Spleen (tissue), 13 donors: ENCODE measurements at regions of chr13 and their contacts with region 1.

Region 1: DNA sequence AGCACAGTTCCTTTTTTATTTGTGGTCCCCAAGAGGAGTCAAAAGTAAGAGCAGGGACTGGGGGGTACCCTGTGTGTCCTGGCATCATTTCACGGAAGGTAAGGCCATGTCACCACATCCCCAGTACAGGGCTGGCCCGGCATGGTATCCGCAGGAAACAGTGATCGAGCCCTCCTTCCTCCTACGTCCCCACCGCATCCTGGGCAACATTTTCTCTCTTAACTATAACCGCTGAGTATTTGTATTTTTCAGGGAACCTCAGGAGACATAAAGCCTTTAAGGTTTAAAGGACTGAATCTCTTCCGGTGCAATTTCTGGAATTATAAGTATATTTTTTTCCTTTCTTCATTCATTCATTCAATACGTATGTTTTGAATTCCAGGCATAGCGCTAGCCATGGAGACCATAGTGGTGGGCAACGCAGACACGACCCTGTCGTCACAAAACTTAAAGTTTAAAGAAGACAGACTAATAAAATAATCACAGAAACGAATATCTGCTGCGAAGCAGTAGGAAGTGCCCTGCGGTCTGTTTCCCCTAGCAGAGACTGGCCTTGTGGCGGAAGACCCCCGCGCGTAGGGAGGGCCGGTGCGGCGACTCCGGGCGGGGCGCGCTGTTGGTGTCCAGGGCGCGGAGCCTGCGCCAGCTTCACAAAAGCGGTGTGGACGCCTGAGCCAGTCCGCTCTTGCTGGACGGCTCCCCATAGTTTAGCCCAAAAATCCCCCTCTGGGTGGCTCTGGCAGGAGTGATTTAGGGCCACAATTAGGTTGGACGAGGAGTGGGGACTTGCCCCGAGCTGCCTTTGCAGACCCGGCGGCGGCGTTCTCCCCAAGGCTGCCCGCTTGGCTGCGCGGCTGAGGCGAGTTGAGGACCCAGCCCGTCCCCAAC is 13.9 kb upstream of the LATS2 start:
- DNase-seq: peak; percentile 88
- H3K4me3 ChIP-seq: peak overlapping the region; percentile 29 to 77 (median 54)
- H3K27ac ChIP-seq: peak overlapping the region; percentile 22 to 87 (median 70)
- H3K4me1 ChIP-seq: peaks cover 7 to 50% (median 24%) of the 10 kb centered on the region in 6 donors
- H3K27me3 ChIP-seq: peaks cover 0 to 19% (median 0%) of the 10 kb centered on the region in 7 donors
- CTCF ChIP-seq: no peak
- POLR2A ChIP-seq: no peak

Region 2: DNA sequence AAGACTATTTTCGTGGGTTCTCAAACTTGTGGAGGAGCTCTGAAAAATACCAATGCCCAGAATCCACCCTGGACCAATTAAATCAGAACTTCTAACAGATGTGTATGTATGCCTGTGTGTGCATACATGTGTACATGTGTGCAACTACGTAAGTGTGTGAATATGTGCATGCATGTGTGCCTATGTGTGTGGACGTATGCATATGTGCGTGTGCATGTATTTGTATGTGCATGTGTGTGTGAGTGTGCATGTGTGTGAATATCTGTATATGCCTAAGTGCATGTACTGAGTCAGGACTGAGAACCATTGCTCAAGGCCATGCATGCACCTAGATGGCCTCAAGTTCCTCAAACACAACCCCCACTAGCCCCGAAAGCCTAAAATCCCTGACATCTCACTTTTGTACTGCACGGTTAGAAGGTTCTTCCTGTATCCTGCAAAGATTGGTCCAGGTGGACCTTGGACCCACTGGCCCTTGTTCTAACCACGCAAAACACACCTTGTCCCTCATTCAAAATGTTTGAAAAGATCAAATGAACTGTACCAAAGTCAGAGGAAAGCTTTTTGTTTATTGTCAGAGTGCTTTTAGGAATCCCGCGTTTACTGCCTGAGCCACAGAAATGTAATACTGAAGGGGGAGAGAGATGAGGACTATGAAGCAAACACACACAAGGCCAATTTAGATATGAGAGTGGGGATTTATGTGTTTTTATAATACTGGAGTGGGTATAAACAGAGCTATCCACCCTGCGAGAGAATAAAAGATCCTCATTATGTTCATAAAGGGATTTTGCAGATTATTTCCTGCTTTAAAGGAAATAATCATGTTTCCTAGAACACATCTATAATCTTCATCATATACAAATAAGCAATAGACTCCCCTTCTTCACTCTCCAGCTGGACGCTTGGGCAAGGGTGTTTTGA is 52.9 kb before region 1 on chr13:
- intact Hi-C with region 1: loop called (anchors 10 kb)
- DNase-seq: no peak
- H3K4me3 ChIP-seq: no peak overlapping the region
- H3K27ac ChIP-seq: peak overlapping the region in 1 of 8 donors; percentile 11
- H3K4me1 ChIP-seq: peaks cover 10 to 49% (median 27%) of the 10 kb centered on the region in 6 donors
- H3K27me3 ChIP-seq: no peaks in the 10 kb centered on the region
- CTCF ChIP-seq: no peak
- POLR2A ChIP-seq: no peak